HepG2 (cell line): ENCODE measurements at regions of chr3 and their contacts with region 1.

Region 1: GRCh38 chr3:191369616-191370010 is 39.3 kb upstream of the UTS2B start:
- DNase-seq: no peak
- ATAC-seq: no peak
- H3K4me3 ChIP-seq: no peak overlapping the region
- H3K27ac ChIP-seq: no peak overlapping the region
- H3K4me1 ChIP-seq: no peaks in the 10 kb centered on the region
- H3K27me3 ChIP-seq: no peaks in the 10 kb centered on the region
- CTCF ChIP-seq: no peak
- EP300 ChIP-seq: no peak
- POLR2A ChIP-seq: no peak
- RAD21 ChIP-seq: no peak

Region 2: GRCh38 chr3:191336833-191337232 is 32.8 kb before region 1 on chr3:
- CTCF ChIA-PET with region 1: no interaction called
- POLR2A ChIA-PET with region 1: no interaction called
- in situ Hi-C with region 1: no loop called
- intact Hi-C with region 1: loop called (anchors 5 kb)
- DNase-seq: no peak
- ATAC-seq: no peak
- H3K4me3 ChIP-seq: no peak overlapping the region
- H3K27ac ChIP-seq: no peak overlapping the region
- H3K4me1 ChIP-seq: peaks cover 96% of the 10 kb centered on the region
- H3K27me3 ChIP-seq: no peaks in the 10 kb centered on the region
- CTCF ChIP-seq: no peak
- EP300 ChIP-seq: no peak
- POLR2A ChIP-seq: no peak
- RAD21 ChIP-seq: no peak

Region 3: GRCh38 chr3:192737506-192737905 is 1367.9 kb after region 1 on chr3:
- CTCF ChIA-PET with region 1: no interaction called
- POLR2A ChIA-PET with region 1: no interaction called
- in situ Hi-C with region 1: no loop called
- intact Hi-C with region 1: no loop called
- DNase-seq: no peak
- ATAC-seq: no peak
- H3K4me3 ChIP-seq: no peak overlapping the region
- H3K27ac ChIP-seq: no peak overlapping the region
- H3K4me1 ChIP-seq: no peaks in the 10 kb centered on the region
- H3K27me3 ChIP-seq: no peaks in the 10 kb centered on the region
- CTCF ChIP-seq: no peak
- EP300 ChIP-seq: no peak
- POLR2A ChIP-seq: no peak
- RAD21 ChIP-seq: no peak